ENCODE measurements at regions of chr2 and their contacts with region 1.

Region 1: DNA sequence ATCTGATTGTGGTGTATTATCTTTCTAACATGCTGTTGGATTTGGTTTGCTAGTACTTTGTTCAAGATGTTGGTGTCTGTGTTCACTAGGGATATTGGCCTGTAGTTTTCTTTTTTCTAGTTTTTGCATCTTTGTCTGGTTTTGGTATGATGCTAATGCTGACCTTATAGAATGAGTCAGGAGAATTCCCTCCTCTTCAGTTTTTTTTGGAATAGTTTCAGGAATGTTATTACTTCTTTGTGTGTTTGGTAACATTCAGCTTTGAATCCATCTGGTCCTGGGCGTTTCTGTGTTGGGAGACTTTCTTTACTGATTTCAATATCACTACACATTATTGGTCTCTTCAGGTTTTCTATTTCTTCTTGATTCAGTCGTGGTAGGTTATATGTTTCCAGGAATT is 124.2 kb upstream of the EPB41L5 start:
- DNase-seq: no peak
- H3K4me3 ChIP-seq: no peak overlapping the region
- H3K27ac ChIP-seq: no peak overlapping the region
- H3K4me1 ChIP-seq: no peaks in the 10 kb centered on the region
- CTCF ChIP-seq: no peak

Region 2: GRCh38 chr2:119366649-119367471 is 521.8 kb before region 1 on chr2 and contains the starts of genes C2orf76 and DBI:
- CTCF ChIA-PET with region 1: no interaction called
- POLR2A ChIA-PET with region 1: no interaction called
- intact Hi-C with region 1: no loop called
- DNase-seq: peak; percentile 97
- H3K4me3 ChIP-seq: peak within 1 kb of the TSS; percentile 92
- H3K27ac ChIP-seq: peak within 1 kb of the TSS; percentile 77
- H3K4me1 ChIP-seq: peaks cover 39% of the 10 kb centered on the region
- CTCF ChIP-seq: no peak
- total RNA-seq, gene C2orf76: 14.2 and 15.4 TPM in 2 replicates
- total RNA-seq, gene DBI: 293 and 348 TPM in 2 replicates

Region 3: GRCh38 chr2:119823734-119824334 is 64.8 kb before region 1 on chr2:
- CTCF ChIA-PET with region 1: no interaction called
- POLR2A ChIA-PET with region 1: no interaction called
- intact Hi-C with region 1: no loop called
- DNase-seq: peak; percentile 48
- H3K4me3 ChIP-seq: no peak overlapping the region
- H3K27ac ChIP-seq: no peak overlapping the region
- H3K4me1 ChIP-seq: no peaks in the 10 kb centered on the region
- CTCF ChIP-seq: peak; percentile 85

Region 4: GRCh38 chr2:119996148-119996547 is 107.5 kb after region 1 on chr2:
- CTCF ChIA-PET with region 1: no interaction called
- POLR2A ChIA-PET with region 1: interaction called, 10 read pairs
- intact Hi-C with region 1: no loop called
- DNase-seq: no peak
- H3K4me3 ChIP-seq: no peak overlapping the region
- H3K27ac ChIP-seq: no peak overlapping the region
- H3K4me1 ChIP-seq: no peaks in the 10 kb centered on the region
- CTCF ChIP-seq: no peak